Transverse colon (tissue), 4 donors: ENCODE measurements at regions of chr13 and their contacts with region 1.

Region 1: GRCh38 chr13:98476538-98476966 is 100.4 kb downstream of the STK24 start:
- DNase-seq: peak; percentile 74
- H3K4me3 ChIP-seq: no peak overlapping the region
- H3K27ac ChIP-seq: peak overlapping the region; percentile 10 to 53 (median 32)
- H3K4me1 ChIP-seq: peaks cover 22 to 47% (median 35%) of the 10 kb centered on the region in 4 donors
- H3K27me3 ChIP-seq: no peaks in the 10 kb centered on the region
- CTCF ChIP-seq: no peak
- EP300 ChIP-seq: no peak
- POLR2A ChIP-seq: no peak

Region 2: DNA sequence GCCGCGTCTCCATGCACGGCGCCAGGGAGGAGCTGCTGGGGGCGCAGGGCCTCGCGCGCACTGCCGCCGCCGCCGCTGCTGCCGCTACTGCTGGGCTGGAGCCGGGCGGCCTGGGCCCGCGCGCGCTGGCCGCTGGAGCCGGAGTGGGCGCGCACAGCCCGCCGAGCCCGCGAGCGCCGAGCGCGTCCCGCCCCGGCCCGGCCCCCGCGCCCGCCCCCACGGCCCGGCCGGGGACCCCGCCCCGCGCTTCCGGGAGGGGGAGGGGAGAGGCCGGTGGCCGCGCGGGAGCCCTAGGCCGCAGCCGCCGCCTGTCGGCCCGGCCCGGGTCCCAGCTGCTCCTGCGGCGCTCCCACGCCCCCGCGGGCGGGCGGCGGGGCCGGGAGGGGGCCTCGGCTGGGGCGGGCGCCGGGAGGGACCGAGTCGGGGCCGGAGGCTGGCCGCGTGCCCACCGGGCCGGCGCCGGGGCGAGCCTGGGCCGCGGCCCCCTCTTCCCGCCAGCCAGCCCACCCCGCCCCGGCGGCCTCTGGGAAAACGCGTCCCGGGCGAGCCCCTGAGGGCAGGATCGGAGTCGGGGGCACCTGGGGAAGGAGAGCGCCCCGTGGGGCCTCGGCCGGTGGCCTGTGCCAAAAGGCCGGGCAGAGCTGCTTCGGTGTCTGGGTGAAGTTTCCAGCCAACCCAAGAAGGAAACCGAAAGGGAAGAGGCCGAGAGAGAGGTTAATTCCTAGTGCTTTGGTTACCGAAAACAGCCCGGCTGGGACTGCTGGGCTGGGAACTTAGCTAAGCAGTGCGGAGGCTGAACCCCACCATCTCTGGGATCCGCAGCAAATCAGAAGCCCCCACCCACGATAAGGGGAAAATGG is 100.6 kb after region 1 on chr13 and contains the start of gene STK24:
- in situ Hi-C with region 1: loop called in 1 of 4 experiments (anchors 10 kb)
- intact Hi-C with region 1: no loop called
- DNase-seq: peak; percentile 78
- H3K4me3 ChIP-seq: peak within 1 kb of the TSS; percentile 82 to 96 (median 82)
- H3K27ac ChIP-seq: peak within 1 kb of the TSS; percentile 97 to 100 (median 100)
- H3K4me1 ChIP-seq: peaks cover 16 to 52% (median 42%) of the 10 kb centered on the region in 4 donors
- H3K27me3 ChIP-seq: no peaks in the 10 kb centered on the region
- CTCF ChIP-seq: no peak
- EP300 ChIP-seq: no peak
- POLR2A ChIP-seq: peak; percentile 60
- total RNA-seq, gene STK24: 87.2 to 152 (median 131) TPM